Activated CD4-positive, alpha-beta memory T cell treated with anti-CD3 and anti-CD28 coated beads, Interleukin-2, amount 10 ng/mL, durations not matched to agents 7 days and 5 days (primary cell): ENCODE measurements at regions of chr14 and their contacts with region 1.

Region 1: GRCh38 chr14:103333754-103334643 is at the start of gene EIF5:
- DNase-seq: peak; percentile 99
- H3K4me3 Mint-ChIP-seq: peak within 1 kb of the TSS; percentile 86
- H3K27ac Mint-ChIP-seq: peak within 1 kb of the TSS; percentile 92
- H3K4me1 Mint-ChIP-seq: peaks cover 44% of the 10 kb centered on the region
- H3K27me3 Mint-ChIP-seq: no peaks in the 10 kb centered on the region
- total RNA-seq, gene EIF5: 188 to 197 TPM

Region 2: DNA sequence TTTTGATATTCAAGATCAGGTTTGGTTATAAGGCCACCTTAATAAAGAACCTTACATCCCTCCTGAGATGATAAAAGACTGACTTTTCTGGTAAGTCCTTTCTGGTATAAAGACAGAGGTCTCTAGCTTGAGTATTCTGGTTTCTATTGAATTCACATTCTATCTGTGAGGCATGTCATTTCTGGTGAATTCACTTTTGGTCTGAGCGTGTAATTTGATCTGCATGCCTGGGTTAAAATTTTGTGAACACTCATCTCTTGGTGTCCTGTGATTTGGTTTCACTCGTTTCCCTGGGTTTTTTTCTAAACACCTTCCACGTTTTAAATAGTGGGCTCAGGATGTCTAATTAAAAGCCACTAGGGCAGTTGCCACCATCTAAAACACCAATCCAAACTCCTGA is 12.3 kb after region 1 on chr14:
- CTCF ChIA-PET with region 1: interaction called, 3 read pairs
- POLR2A ChIA-PET with region 1: interaction called, 69 read pairs
- DNase-seq: no peak
- H3K4me3 Mint-ChIP-seq: no peak overlapping the region
- H3K27ac Mint-ChIP-seq: no peak overlapping the region
- H3K4me1 Mint-ChIP-seq: peaks cover 1% of the 10 kb centered on the region
- H3K27me3 Mint-ChIP-seq: peaks cover 5% of the 10 kb centered on the region

Region 3: GRCh38 chr14:103385152-103385993 is 51.4 kb after region 1 on chr14 and contains the start of gene MARK3:
- CTCF ChIA-PET with region 1: interaction called, 31 read pairs
- POLR2A ChIA-PET with region 1: interaction called, 54 read pairs
- DNase-seq: peak; percentile 97
- H3K4me3 Mint-ChIP-seq: peak within 1 kb of the TSS; percentile 97
- H3K27ac Mint-ChIP-seq: peak within 1 kb of the TSS; percentile 97
- H3K4me1 Mint-ChIP-seq: peaks cover 37% of the 10 kb centered on the region
- H3K27me3 Mint-ChIP-seq: peaks cover 11% of the 10 kb centered on the region
- total RNA-seq, gene MARK3: 76.0 to 84.2 TPM

Region 4: DNA sequence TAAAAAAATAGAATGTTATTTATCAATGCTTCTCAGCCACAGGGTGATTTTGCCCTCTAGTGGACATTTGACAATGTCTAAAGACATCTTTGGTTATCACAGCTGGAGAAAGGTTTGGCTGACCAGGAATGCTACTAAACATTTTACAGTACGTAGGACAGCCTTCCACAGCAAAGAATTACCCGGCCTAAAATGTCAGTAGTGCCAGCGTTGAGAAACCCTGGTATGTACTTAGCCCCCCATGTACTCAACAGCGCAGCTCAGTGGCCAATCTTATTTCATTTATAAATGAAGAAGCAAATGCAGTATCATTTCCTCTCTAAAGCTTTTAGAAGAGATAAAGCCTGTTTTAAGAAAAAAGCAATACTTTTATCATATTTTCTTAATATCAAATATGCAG is 57.0 kb after region 1 on chr14:
- CTCF ChIA-PET with region 1: interaction called, 31 read pairs
- POLR2A ChIA-PET with region 1: interaction called, 13 read pairs
- DNase-seq: peak; percentile 48
- H3K4me3 Mint-ChIP-seq: no peak overlapping the region
- H3K27ac Mint-ChIP-seq: no peak overlapping the region
- H3K4me1 Mint-ChIP-seq: peaks cover 47% of the 10 kb centered on the region
- H3K27me3 Mint-ChIP-seq: no peaks in the 10 kb centered on the region

Region 5: DNA sequence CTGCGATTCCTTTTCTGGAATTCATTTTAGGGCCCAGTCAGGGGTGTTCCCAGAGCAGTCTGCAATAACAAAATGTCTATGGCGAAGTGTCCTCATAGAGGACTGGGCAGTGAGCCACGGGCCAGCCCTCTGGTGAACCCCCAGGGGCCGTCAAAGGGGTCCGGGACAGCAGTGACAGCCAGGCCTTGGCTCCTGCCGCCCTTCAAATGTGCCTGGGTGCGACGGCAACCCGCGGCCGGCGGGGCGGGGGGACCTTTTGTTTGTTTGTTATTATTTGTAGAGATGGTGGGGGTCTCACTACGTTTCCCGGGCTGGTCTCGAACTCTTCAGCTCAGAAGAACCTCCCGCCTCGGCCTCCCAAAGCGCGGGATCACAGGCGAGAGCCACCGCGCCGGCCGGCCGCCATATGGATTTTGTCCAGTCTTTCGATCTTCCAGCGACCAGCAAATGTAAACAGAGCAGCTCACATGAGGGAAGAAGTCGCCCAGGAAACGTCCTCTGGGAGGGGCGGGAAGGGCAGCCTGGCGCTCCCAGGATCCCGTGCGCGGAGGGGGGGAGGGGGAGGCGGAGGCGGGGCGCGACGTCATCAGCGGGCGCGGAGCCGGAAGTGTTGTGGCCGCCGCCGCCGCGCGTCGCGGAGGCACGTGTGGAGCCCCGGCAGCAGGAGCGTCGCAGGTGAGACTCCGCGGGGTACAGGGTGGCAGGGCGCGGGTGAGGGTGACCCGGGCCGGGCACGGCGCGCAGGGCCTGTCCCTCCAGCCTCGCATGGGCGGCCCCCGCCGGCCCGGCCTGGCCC is 194.8 kb after region 1 on chr14 and contains the start of gene TRMT61A:
- CTCF ChIA-PET with region 1: no interaction called
- POLR2A ChIA-PET with region 1: interaction called, 12 read pairs
- DNase-seq: peak; percentile 82
- H3K4me3 Mint-ChIP-seq: peak within 1 kb of the TSS; percentile 89
- H3K27ac Mint-ChIP-seq: peak within 1 kb of the TSS; percentile 92
- H3K4me1 Mint-ChIP-seq: peaks cover 36% of the 10 kb centered on the region
- H3K27me3 Mint-ChIP-seq: peaks cover 15% of the 10 kb centered on the region
- total RNA-seq, gene TRMT61A: 4.5 to 5.1 TPM